B cell (primary cell): ENCODE measurements at regions of chr5 and their contacts with region 1.

Region 1: DNA sequence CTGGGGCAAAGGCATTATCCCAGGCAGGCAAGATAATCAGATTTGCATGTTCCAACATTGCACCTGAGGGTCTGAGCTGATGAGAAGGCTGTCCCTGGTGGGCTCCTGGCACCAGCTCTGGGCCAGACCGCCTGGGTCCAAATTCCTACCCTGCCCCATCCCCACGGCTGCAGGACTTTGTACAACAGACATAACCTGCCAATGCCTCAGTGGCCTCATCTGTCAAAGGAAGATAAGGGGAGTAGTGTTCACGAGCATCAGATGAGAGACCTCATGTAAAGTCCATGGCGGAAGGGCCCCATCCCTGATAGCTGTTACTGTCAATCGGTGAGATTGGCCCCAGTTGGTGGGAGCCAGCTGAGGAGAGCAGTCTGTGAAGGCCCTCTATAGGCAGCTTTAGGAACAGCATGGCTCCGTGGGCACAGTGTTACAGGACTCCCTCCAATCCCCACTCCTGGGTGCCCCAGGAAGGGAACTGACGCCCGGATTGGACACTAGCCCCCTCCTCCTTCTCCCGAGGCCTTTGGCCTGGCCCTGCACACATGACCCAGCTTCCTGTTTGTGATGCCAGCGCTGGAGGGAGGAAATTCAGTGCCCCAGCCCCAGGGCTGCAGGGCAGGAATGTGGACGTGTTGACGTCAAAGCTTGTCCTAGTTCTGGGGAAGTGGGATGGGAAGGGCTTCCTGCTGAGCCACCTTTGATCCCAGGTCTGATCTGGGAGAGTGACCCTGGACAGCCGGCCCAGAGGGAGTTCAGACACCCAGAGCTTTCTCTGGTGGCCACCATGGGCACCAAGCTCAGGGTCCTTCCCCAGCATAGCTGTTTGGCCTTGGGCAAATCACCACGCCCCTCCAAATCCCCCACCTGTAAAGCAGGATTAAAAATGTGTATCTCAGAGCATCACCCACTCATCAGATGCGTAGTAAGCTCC is 56.2 kb downstream of the DUSP1 start:
- DNase-seq: peak; percentile 80
- ATAC-seq: peak; percentile 77
- H3K4me3 ChIP-seq: no peak overlapping the region
- H3K4me3 Mint-ChIP-seq: no peak overlapping the region
- H3K27ac ChIP-seq: no peak overlapping the region
- H3K27ac Mint-ChIP-seq: no peak overlapping the region
- H3K4me1 ChIP-seq: peaks cover 7% of the 10 kb centered on the region in 2 donors
- H3K4me1 Mint-ChIP-seq: peaks cover 10% of the 10 kb centered on the region
- H3K27me3 ChIP-seq: peaks cover 0 to 4% (median 0%) of the 10 kb centered on the region in 4 experiments
- H3K27me3 Mint-ChIP-seq: peaks cover 19% of the 10 kb centered on the region
- CTCF ChIP-seq: peak; percentile 89

Region 2: GRCh38 chr5:172223901-172224873 is 490.6 kb before region 1 on chr5:
- CTCF ChIA-PET with region 1: no interaction called
- POLR2A ChIA-PET with region 1: no interaction called
- intact Hi-C with region 1: no loop called
- DNase-seq: no peak
- ATAC-seq: no peak
- H3K4me3 ChIP-seq: no peak overlapping the region
- H3K4me3 Mint-ChIP-seq: no peak overlapping the region
- H3K27ac ChIP-seq: no peak overlapping the region
- H3K27ac Mint-ChIP-seq: peak overlapping the region; percentile 38
- H3K4me1 ChIP-seq: peaks cover 3 to 4% of the 10 kb centered on the region in 2 donors
- H3K4me1 Mint-ChIP-seq: peaks cover 10% of the 10 kb centered on the region
- H3K27me3 ChIP-seq: no peaks in the 10 kb centered on the region
- H3K27me3 Mint-ChIP-seq: no peaks in the 10 kb centered on the region
- CTCF ChIP-seq: no peak

Region 3: DNA sequence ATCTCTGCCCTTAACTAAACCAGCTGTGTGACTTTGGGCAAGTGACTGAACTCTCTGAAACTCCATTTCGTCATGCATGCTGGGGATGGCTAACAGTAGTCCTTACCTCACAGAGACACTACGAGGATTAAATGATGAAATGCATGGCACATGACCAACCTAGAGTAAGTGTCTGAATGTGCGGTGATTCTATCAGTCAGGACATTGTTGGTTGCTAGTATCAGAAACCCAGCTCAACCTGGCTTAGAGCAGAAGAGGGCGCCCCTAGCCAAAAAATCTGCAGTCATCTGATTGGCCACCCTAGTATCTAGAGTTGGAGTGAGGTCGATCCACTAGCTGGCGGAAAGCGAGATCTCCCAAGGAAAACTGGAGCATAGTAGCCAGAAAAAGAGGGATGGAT is 48.5 kb before region 1 on chr5:
- CTCF ChIA-PET with region 1: no interaction called
- POLR2A ChIA-PET with region 1: no interaction called
- intact Hi-C with region 1: no loop called
- DNase-seq: no peak
- ATAC-seq: no peak
- H3K4me3 ChIP-seq: no peak overlapping the region
- H3K4me3 Mint-ChIP-seq: no peak overlapping the region
- H3K27ac ChIP-seq: no peak overlapping the region
- H3K27ac Mint-ChIP-seq: no peak overlapping the region
- H3K4me1 ChIP-seq: no peaks in the 10 kb centered on the region
- H3K4me1 Mint-ChIP-seq: no peaks in the 10 kb centered on the region
- H3K27me3 ChIP-seq: no peaks in the 10 kb centered on the region
- H3K27me3 Mint-ChIP-seq: peaks cover 22% of the 10 kb centered on the region
- CTCF ChIP-seq: no peak

Region 4: GRCh38 chr5:172764849-172765765 is 50.4 kb after region 1 on chr5:
- CTCF ChIA-PET with region 1: interaction called, 68 read pairs
- POLR2A ChIA-PET with region 1: no interaction called
- intact Hi-C with region 1: loop called (anchors 1 kb)
- DNase-seq: peak; percentile 99
- ATAC-seq: peak; percentile 78
- H3K4me3 ChIP-seq: peak overlapping the region; percentile 27 to 74 (median 52)
- H3K4me3 Mint-ChIP-seq: peak overlapping the region; percentile 83
- H3K27ac ChIP-seq: peak overlapping the region; percentile 92 to 94
- H3K27ac Mint-ChIP-seq: peak overlapping the region; percentile 94
- H3K4me1 ChIP-seq: peaks cover 33 to 42% of the 10 kb centered on the region in 2 donors
- H3K4me1 Mint-ChIP-seq: peaks cover 59% of the 10 kb centered on the region
- H3K27me3 ChIP-seq: no peaks in the 10 kb centered on the region
- H3K27me3 Mint-ChIP-seq: no peaks in the 10 kb centered on the region
- CTCF ChIP-seq: no peak

Region 5: DNA sequence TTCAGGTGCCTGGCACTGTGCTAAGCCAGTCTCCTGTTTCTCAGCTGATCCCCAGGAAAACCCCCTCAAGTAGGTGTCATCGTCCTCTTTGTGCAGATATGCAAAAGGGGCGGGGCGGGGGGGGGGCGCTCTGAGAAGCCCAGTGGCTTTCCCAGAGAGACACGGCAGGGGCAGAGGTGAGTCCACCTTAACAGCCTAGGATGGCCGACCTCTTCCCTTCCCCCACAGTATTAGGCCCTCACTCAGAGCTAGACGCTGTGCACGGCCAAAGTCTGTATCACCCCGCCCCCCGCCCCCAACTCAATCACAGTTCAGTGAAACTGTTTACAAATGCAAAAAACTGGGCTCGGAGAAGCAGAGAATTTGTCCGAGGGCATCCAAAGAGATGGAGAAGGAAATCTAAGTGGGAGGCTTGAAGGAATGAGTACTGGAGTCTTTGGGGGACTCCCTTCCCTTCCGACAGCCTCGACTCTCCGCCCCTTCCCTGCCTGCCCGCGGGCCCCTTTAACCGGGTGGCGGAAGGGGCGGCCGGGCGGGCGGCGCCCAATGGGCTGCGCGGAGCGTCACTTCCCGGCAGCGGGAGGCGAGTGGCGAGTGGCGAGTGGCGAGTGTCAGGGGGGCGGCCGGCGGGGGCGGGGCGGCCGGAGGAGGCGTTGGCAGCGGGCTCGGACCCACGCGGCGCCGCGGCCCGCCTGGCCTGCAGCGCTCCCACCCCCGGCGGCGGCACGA is 119.1 kb after region 1 on chr5 and contains the start of gene ERGIC1:
- CTCF ChIA-PET with region 1: interaction called, 5 read pairs
- POLR2A ChIA-PET with region 1: no interaction called
- intact Hi-C with region 1: loop called (anchors 2 kb)
- DNase-seq: peak; percentile 86
- ATAC-seq: peak; percentile 74
- H3K4me3 ChIP-seq: peak within 1 kb of the TSS; percentile 62 to 90 (median 69)
- H3K4me3 Mint-ChIP-seq: peak within 1 kb of the TSS; percentile 90
- H3K27ac ChIP-seq: peak within 1 kb of the TSS; percentile 95 to 98
- H3K27ac Mint-ChIP-seq: peak within 1 kb of the TSS; percentile 96
- H3K4me1 ChIP-seq: peaks cover 42 to 52% of the 10 kb centered on the region in 2 donors
- H3K4me1 Mint-ChIP-seq: peaks cover 48% of the 10 kb centered on the region
- H3K27me3 ChIP-seq: no peaks in the 10 kb centered on the region
- H3K27me3 Mint-ChIP-seq: no peaks in the 10 kb centered on the region
- CTCF ChIP-seq: no peak
- total RNA-seq, gene ERGIC1: 132 and 140 TPM in 2 replicates

Region 6: DNA sequence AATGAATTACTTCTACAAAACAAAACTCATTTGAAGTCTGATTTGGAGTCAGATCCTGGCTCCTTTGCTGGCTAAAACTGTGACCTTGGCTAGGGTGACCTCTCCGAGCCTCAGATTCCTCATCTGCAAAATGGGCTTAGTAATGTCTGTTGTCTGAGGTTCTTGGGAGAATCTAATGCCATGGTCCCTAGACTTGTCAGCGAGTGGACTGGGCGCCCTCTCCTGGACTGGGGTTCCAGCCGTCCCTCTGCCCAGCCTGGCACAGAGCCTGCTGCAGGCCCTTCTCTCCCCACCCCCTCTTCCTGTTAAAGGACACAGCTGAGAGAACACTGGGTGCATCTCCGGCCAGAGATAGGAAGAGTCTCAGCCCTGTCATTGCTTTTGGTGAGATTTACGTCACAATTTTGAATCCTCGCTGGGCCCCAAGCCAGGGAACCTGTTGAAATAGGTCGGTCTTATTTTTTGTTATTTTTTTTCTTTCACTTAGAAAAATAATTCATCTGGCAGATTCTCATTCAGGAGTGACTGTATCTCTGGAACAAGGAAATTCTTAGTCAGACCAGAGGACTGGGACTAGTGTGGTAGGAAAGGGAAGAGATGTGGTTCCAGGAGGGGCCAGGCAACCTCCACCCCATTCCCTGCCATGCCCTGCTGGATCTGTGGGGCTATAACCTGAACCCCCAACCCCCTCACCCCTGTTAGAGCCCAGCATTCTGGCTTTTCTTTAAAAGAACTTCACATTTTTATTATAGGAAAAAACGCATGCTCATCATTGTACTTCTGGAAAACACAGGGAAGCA is 196.3 kb after region 1 on chr5:
- CTCF ChIA-PET with region 1: interaction called, 27 read pairs
- POLR2A ChIA-PET with region 1: no interaction called
- intact Hi-C with region 1: loop called (anchors 1 kb)
- DNase-seq: peak; percentile 73
- ATAC-seq: peak; percentile 83
- H3K4me3 ChIP-seq: no peak overlapping the region
- H3K4me3 Mint-ChIP-seq: peak overlapping the region; percentile 38
- H3K27ac ChIP-seq: peak overlapping the region; percentile 59 to 91
- H3K27ac Mint-ChIP-seq: peak overlapping the region; percentile 89
- H3K4me1 ChIP-seq: peaks cover 16 to 18% of the 10 kb centered on the region in 2 donors
- H3K4me1 Mint-ChIP-seq: peaks cover 20% of the 10 kb centered on the region
- H3K27me3 ChIP-seq: no peaks in the 10 kb centered on the region
- H3K27me3 Mint-ChIP-seq: no peaks in the 10 kb centered on the region
- CTCF ChIP-seq: no peak

Region 7: GRCh38 chr5:172932313-172933017 is 217.7 kb after region 1 on chr5:
- CTCF ChIA-PET with region 1: interaction called, 368 read pairs
- POLR2A ChIA-PET with region 1: interaction called, 6 read pairs
- intact Hi-C with region 1: loop called (anchors 1 kb)
- DNase-seq: peak; percentile 80
- ATAC-seq: peak; percentile 95
- H3K4me3 ChIP-seq: no peak overlapping the region
- H3K4me3 Mint-ChIP-seq: no peak overlapping the region
- H3K27ac ChIP-seq: no peak overlapping the region
- H3K27ac Mint-ChIP-seq: peak overlapping the region; percentile 78
- H3K4me1 ChIP-seq: peaks cover 0 to 6% of the 10 kb centered on the region in 2 donors
- H3K4me1 Mint-ChIP-seq: peaks cover 16% of the 10 kb centered on the region
- H3K27me3 ChIP-seq: no peaks in the 10 kb centered on the region
- H3K27me3 Mint-ChIP-seq: no peaks in the 10 kb centered on the region
- CTCF ChIP-seq: peak; percentile 96

Region 8: DNA sequence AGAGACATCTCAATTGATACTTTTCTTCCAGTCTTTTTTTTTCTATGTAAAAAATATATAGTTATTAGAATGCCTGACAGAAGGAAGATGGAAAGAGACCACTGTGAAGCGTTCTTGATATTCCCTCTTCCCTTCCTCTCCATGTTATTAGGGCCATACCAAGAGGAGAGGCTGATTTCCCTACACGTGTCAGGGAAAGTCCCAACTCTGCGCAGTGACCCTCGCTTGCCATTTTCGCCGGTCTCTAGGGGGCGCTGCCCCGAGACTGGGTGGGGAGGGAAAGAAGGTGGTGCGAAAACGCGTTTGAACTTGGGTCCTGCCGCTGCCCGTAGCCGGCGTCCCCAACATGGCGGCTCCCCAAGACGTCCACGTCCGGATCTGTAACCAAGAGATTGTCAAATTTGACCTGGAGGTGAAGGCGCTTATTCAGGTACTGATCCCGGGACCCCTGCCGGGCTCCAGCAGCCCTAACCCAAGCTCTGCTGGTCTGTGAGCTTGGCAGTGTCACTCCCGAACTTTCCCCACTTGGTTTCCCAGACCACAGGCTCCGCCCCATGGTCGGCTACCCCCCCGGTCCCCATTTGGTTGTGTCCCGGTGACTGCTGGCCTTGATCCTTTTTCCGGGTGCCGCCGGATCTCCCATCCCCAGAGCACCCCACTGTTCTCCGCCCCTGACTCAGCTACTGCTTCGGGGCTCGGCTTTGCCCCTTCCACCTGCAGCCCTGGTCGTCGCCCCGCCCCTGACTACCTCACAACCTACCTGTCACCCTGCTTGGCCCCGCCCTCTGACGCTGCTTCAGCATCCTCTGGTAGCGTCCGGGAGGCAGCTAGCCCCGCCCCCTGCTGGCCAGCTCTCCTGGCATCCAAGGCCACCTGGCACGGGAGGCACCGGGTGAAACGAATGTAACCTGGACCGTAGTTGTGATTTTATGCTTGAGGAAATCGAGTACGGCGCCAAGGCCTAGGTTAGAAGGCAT is 429.7 kb after region 1 on chr5 and contains the start of gene BNIP1:
- CTCF ChIA-PET with region 1: interaction called, 3 read pairs
- POLR2A ChIA-PET with region 1: no interaction called
- intact Hi-C with region 1: loop called (anchors 1 kb)
- DNase-seq: peak; percentile 97
- ATAC-seq: peak; percentile 90
- H3K4me3 ChIP-seq: peak within 1 kb of the TSS; percentile 79 to 100 (median 97)
- H3K4me3 Mint-ChIP-seq: peak within 1 kb of the TSS; percentile 98
- H3K27ac ChIP-seq: peak within 1 kb of the TSS; percentile 90 to 95
- H3K27ac Mint-ChIP-seq: peak within 1 kb of the TSS; percentile 98
- H3K4me1 ChIP-seq: peaks cover 3 to 8% of the 10 kb centered on the region in 2 donors
- H3K4me1 Mint-ChIP-seq: peaks cover 8% of the 10 kb centered on the region
- H3K27me3 ChIP-seq: no peaks in the 10 kb centered on the region
- H3K27me3 Mint-ChIP-seq: no peaks in the 10 kb centered on the region
- CTCF ChIP-seq: peak; percentile 81
- total RNA-seq, gene BNIP1: 8.0 and 10.0 TPM in 2 replicates